CD8-positive, alpha-beta T cell (primary cell): ENCODE measurements at regions of chr16 and their contacts with region 1.

Region 1: GRCh38 chr16:81314603-81315270 is at the start of gene GAN:
- DNase-seq: peak; percentile 86 to 97 (median 93)
- ATAC-seq: peak; percentile 96
- H3K4me3 ChIP-seq: peak within 1 kb of the TSS; percentile 77 to 87
- H3K4me3 Mint-ChIP-seq: peak within 1 kb of the TSS; percentile 95
- H3K27ac ChIP-seq: peak within 1 kb of the TSS; percentile 59 to 68
- H3K27ac Mint-ChIP-seq: peak within 1 kb of the TSS; percentile 93
- H3K4me1 ChIP-seq: peaks cover 18% of the 10 kb centered on the region
- H3K4me1 Mint-ChIP-seq: peaks cover 59% of the 10 kb centered on the region
- H3K27me3 ChIP-seq: no peaks in the 10 kb centered on the region
- H3K27me3 Mint-ChIP-seq: no peaks in the 10 kb centered on the region
- CTCF ChIP-seq: no peak
- total RNA-seq, gene GAN: 8.7 to 9.4 TPM

Region 2: GRCh38 chr16:81035398-81035974 is 279.3 kb before region 1 on chr16 and contains the start of gene ATMIN:
- CTCF ChIA-PET with region 1: no interaction called
- POLR2A ChIA-PET with region 1: interaction called, 4 read pairs
- intact Hi-C with region 1: loop called (anchors 1 to 5 kb)
- DNase-seq: peak; percentile 79 to 94 (median 90)
- ATAC-seq: peak; percentile 97
- H3K4me3 ChIP-seq: peak within 1 kb of the TSS; percentile 47 to 59
- H3K4me3 Mint-ChIP-seq: peak within 1 kb of the TSS; percentile 87
- H3K27ac ChIP-seq: peak within 1 kb of the TSS in 1 of 2 experiments; percentile 34
- H3K27ac Mint-ChIP-seq: peak within 1 kb of the TSS; percentile 82
- H3K4me1 ChIP-seq: peaks cover 20% of the 10 kb centered on the region
- H3K4me1 Mint-ChIP-seq: peaks cover 34% of the 10 kb centered on the region
- H3K27me3 ChIP-seq: no peaks in the 10 kb centered on the region
- H3K27me3 Mint-ChIP-seq: no peaks in the 10 kb centered on the region
- CTCF ChIP-seq: peak; percentile 99
- total RNA-seq, gene ATMIN: 32.2 to 35.1 TPM

Region 3: DNA sequence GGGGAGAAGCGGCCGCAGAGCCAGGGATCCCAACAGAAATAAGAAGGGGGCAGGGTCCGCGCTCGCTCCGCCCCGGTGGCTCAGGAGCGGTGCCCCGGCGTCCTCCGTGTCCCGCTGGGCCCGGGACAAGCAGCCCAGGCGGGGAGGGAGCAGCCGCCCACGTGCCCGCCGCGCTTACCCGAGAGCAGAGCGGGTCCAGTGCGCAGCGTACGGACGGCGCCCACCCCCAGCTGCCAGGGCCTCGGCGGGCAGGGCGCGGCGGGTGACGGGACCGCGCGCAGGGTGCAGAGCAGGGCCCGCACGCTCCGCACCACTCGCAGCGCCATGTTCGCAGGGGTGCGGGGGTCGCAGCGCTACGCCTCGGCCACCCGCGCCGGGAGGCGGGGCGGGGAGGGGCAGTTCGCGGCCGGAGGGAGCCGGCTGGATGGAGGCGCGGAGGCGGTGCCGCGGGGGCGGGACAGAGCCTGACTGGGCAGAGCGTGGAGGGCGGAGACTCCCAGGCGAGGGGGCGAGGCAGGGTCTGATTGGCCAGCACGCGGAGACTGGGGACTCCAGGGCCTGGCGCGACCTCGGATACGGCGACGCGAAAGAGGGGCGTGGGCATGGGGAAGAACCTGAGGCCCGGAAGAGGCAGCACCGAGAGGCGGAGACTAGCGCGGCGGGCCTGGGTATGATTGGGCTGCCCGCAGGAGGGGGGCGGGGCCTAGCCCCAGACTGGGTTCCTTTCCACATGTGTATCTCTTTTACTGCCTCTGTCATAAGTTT is 218.6 kb before region 1 on chr16 and contains the start of gene GCSH:
- CTCF ChIA-PET with region 1: no interaction called
- POLR2A ChIA-PET with region 1: no interaction called
- intact Hi-C with region 1: loop called (anchors 5 kb)
- DNase-seq: peak; percentile 94 to 100 (median 98)
- ATAC-seq: peak; percentile 97
- H3K4me3 ChIP-seq: peak within 1 kb of the TSS; percentile 59 to 71
- H3K4me3 Mint-ChIP-seq: peak within 1 kb of the TSS; percentile 88
- H3K27ac ChIP-seq: peak within 1 kb of the TSS; percentile 43 to 58
- H3K27ac Mint-ChIP-seq: peak within 1 kb of the TSS; percentile 49
- H3K4me1 ChIP-seq: peaks cover 7% of the 10 kb centered on the region
- H3K4me1 Mint-ChIP-seq: peaks cover 14% of the 10 kb centered on the region
- H3K27me3 ChIP-seq: no peaks in the 10 kb centered on the region
- H3K27me3 Mint-ChIP-seq: no peaks in the 10 kb centered on the region
- CTCF ChIP-seq: no peak
- total RNA-seq, gene GCSH: 2.5 to 2.8 TPM

Region 4: DNA sequence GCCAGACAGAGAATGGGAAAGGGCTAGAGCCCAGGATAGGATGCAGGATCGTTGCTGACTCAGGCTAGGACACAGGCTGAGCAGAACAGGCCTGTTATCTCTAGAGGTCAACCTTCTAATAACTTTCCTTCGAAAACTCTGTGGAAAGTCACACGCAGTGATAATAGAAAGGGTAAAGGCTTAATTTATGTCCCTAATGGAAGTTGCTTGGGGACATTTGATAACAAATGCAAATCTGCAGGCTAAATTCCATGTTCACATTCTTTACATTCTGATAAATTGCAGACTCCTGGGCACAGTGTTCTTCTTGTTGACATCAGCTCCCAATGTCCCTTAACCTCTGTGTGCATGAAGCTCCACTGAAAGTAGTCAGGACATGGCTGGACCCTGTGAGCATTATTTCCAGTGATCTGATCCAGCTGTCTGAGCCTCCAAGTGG is 91.3 kb before region 1 on chr16:
- CTCF ChIA-PET with region 1: no interaction called
- POLR2A ChIA-PET with region 1: no interaction called
- intact Hi-C with region 1: no loop called
- DNase-seq: no peak
- ATAC-seq: no peak
- H3K4me3 ChIP-seq: no peak overlapping the region
- H3K4me3 Mint-ChIP-seq: no peak overlapping the region
- H3K27ac ChIP-seq: no peak overlapping the region
- H3K27ac Mint-ChIP-seq: no peak overlapping the region
- H3K4me1 ChIP-seq: no peaks in the 10 kb centered on the region
- H3K4me1 Mint-ChIP-seq: no peaks in the 10 kb centered on the region
- H3K27me3 ChIP-seq: peaks cover 0 to 2% of the 10 kb centered on the region in 2 experiments
- H3K27me3 Mint-ChIP-seq: peaks cover 8% of the 10 kb centered on the region
- CTCF ChIP-seq: no peak

Region 5: GRCh38 chr16:81616321-81617055 is 301.8 kb after region 1 on chr16:
- CTCF ChIA-PET with region 1: no interaction called
- POLR2A ChIA-PET with region 1: no interaction called
- intact Hi-C with region 1: loop called in 1 of 2 experiments (anchors 5 kb)
- DNase-seq: peak; percentile 62 to 95 (median 80)
- ATAC-seq: peak; percentile 90
- H3K4me3 ChIP-seq: peak overlapping the region; percentile 13 to 35
- H3K4me3 Mint-ChIP-seq: peak overlapping the region; percentile 68
- H3K27ac ChIP-seq: peak overlapping the region; percentile 90 to 92
- H3K27ac Mint-ChIP-seq: peak overlapping the region; percentile 97
- H3K4me1 ChIP-seq: peaks cover 23% of the 10 kb centered on the region
- H3K4me1 Mint-ChIP-seq: peaks cover 16% of the 10 kb centered on the region
- H3K27me3 ChIP-seq: no peaks in the 10 kb centered on the region
- H3K27me3 Mint-ChIP-seq: no peaks in the 10 kb centered on the region
- CTCF ChIP-seq: no peak

Region 6: GRCh38 chr16:82169861-82170845 is 855.4 kb after region 1 on chr16 and contains the start of gene MPHOSPH6:
- CTCF ChIA-PET with region 1: no interaction called
- POLR2A ChIA-PET with region 1: no interaction called
- intact Hi-C with region 1: loop called (anchors 2 kb)
- DNase-seq: peak; percentile 77 to 95 (median 90)
- ATAC-seq: peak; percentile 94
- H3K4me3 ChIP-seq: peak within 1 kb of the TSS; percentile 85 to 95
- H3K4me3 Mint-ChIP-seq: peak within 1 kb of the TSS; percentile 96
- H3K27ac ChIP-seq: peak within 1 kb of the TSS; percentile 82 to 90
- H3K27ac Mint-ChIP-seq: peak within 1 kb of the TSS; percentile 97
- H3K4me1 ChIP-seq: peaks cover 15% of the 10 kb centered on the region
- H3K4me1 Mint-ChIP-seq: peaks cover 36% of the 10 kb centered on the region
- H3K27me3 ChIP-seq: no peaks in the 10 kb centered on the region
- H3K27me3 Mint-ChIP-seq: peaks cover 3% of the 10 kb centered on the region
- CTCF ChIP-seq: no peak
- total RNA-seq, gene MPHOSPH6: 19.5 to 24.1 TPM